ENCODE measurements at regions of chr18 and their contacts with region 1.

Region 1: GRCh38 chr18:21179590-21180220 is 62.3 kb upstream of the GREB1L start:
- DNase-seq: peak; percentile 35
- H3K4me3 ChIP-seq: no peak overlapping the region
- H3K27ac ChIP-seq: no peak overlapping the region
- H3K4me1 ChIP-seq: no peaks in the 10 kb centered on the region
- H3K27me3 ChIP-seq: no peaks in the 10 kb centered on the region
- CTCF ChIP-seq: peak; percentile 59 to 75 (median 65)
- EP300 ChIP-seq: no peak
- POLR2A ChIP-seq: no peak

Region 2: DNA sequence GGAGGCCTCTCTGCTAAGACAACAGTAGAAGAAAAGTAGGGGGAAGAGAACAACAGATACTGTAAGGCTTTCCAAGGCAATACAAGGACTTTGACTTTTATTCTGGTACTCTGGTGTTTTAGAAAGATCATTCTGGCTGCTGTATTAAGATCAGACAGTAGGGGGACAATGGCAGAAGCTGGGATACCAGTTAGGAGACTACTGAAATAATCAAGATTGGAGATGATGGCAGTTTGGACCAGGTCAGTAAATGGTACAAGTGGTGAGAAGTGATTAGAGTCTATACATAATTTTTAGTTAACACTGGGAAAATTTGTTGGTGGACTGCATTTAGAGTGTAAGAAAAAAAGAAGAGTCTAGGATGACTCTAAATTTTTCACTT is 207.8 kb before region 1 on chr18:
- in situ Hi-C with region 1: loop called in 1 of 4 experiments (anchors 10 kb)
- intact Hi-C with region 1: loop called (anchors 10 kb)
- DNase-seq: no peak
- H3K4me3 ChIP-seq: no peak overlapping the region
- H3K27ac ChIP-seq: no peak overlapping the region
- H3K4me1 ChIP-seq: no peaks in the 10 kb centered on the region
- H3K27me3 ChIP-seq: no peaks in the 10 kb centered on the region
- CTCF ChIP-seq: peak; percentile 32 to 50 (median 41)
- EP300 ChIP-seq: no peak
- POLR2A ChIP-seq: no peak

Region 3: GRCh38 chr18:21111341-21112139 is 68.2 kb before region 1 on chr18 and contains the start of gene ROCK1:
- in situ Hi-C with region 1: loop called in 1 of 4 experiments (anchors 10 kb)
- intact Hi-C with region 1: no loop called
- DNase-seq: peak; percentile 99
- H3K4me3 ChIP-seq: peak within 1 kb of the TSS; percentile 65 to 98 (median 87)
- H3K27ac ChIP-seq: peak within 1 kb of the TSS; percentile 93 to 99 (median 98)
- H3K4me1 ChIP-seq: peaks cover 16 to 45% (median 24%) of the 10 kb centered on the region in 4 donors
- H3K27me3 ChIP-seq: no peaks in the 10 kb centered on the region
- CTCF ChIP-seq: no peak
- EP300 ChIP-seq: no peak
- POLR2A ChIP-seq: peak; percentile 32
- total RNA-seq, gene ROCK1: 23.9 to 59.5 (median 39.6) TPM

Region 4: DNA sequence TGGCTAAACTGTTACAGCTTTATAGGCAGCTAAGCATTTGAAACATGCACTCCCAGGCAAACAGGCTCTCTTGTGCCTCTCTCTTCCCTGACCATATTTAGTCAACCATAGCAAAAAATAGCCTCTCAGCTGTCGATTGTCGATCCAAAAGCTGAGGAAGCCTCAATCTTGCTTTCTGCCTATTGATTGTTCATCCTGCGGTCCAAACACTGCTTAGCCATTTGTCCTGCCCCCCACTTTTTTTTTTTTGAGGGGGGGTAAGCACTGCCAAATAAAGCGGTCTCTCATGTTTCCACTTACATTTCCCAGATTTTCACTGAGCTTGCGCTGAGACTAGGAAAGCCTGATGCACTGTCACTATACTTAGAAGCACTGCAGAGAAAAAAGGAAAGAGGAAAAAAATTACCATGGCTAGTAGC is 651.7 kb after region 1 on chr18:
- in situ Hi-C with region 1: loop called in 1 of 4 experiments (anchors 25 kb)
- intact Hi-C with region 1: no loop called
- DNase-seq: no peak
- H3K4me3 ChIP-seq: peak overlapping the region in 1 of 4 donors; percentile 5
- H3K27ac ChIP-seq: peak overlapping the region; percentile 25 to 73 (median 60)
- H3K4me1 ChIP-seq: peaks cover 0 to 4% (median 0%) of the 10 kb centered on the region in 4 donors
- H3K27me3 ChIP-seq: no peaks in the 10 kb centered on the region
- CTCF ChIP-seq: no peak
- EP300 ChIP-seq: no peak
- POLR2A ChIP-seq: no peak